ENCODE measurements at regions of chr10 and their contacts with region 1.

Region 1: DNA sequence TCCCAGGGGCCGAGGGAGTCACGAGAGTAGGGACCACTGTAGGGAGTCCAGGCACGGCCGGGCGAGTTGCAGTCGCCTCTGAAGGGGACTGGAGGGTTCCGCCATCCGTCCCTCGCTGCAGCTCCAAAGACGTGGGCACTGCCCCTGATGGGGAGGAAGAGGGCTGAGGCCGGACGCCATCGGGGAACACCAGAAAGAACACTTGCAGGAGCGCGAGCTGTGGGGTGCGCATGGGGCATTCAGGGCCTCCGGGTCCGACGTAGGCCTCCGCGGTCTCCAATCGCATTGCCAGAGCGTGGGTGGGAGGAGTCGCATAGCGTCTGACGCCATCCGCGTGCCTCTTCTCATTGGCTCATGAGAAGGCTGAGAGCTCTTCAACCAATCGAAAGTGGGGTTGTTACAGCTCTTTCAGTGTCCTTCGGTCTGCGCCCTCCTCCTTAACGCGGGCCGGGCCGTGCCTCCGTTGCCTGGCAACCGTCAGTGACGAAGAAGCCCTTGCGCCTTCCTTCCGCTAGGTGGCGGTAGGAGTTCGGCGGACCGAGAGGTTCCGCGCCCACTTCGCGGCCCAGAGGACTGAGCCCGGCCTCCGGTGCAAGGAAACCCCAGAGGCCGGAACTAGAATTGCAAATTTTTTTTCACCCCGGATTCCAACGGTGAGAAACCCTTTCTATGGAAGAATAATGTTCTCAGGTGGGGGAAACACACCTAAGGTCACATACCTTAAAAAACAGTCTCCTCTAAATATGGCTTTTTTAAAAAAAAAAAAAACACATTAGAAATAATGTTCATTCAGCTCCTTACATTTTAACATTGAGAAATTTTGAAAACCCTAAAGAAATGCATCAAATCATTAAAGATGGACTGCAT is at the start of gene TCTN3:
- DNase-seq: peak; percentile 97
- ATAC-seq: peak; percentile 98
- H3K4me3 Mint-ChIP-seq: peak within 1 kb of the TSS; percentile 98
- H3K27ac Mint-ChIP-seq: peak within 1 kb of the TSS; percentile 93
- H3K4me1 Mint-ChIP-seq: peaks cover 38% of the 10 kb centered on the region
- H3K27me3 Mint-ChIP-seq: peaks cover 2% of the 10 kb centered on the region
- CTCF ChIP-seq: peak; percentile 98
- total RNA-seq, gene TCTN3: 17.6 to 20.5 TPM

Region 2: GRCh38 chr10:95664543-95664942 is 29.4 kb before region 1 on chr10:
- CTCF ChIA-PET with region 1: interaction called, 11 read pairs
- POLR2A ChIA-PET with region 1: interaction called, 3 read pairs
- intact Hi-C with region 1: no loop called
- DNase-seq: no peak
- ATAC-seq: no peak
- H3K4me3 Mint-ChIP-seq: no peak overlapping the region
- H3K27ac Mint-ChIP-seq: no peak overlapping the region
- H3K4me1 Mint-ChIP-seq: no peaks in the 10 kb centered on the region
- H3K27me3 Mint-ChIP-seq: no peaks in the 10 kb centered on the region
- CTCF ChIP-seq: no peak

Region 3: GRCh38 chr10:95706986-95707385 is 13.1 kb after region 1 on chr10:
- CTCF ChIA-PET with region 1: interaction called, 16 read pairs
- POLR2A ChIA-PET with region 1: interaction called, 3 read pairs
- intact Hi-C with region 1: no loop called
- DNase-seq: no peak
- ATAC-seq: no peak
- H3K4me3 Mint-ChIP-seq: no peak overlapping the region
- H3K27ac Mint-ChIP-seq: no peak overlapping the region
- H3K4me1 Mint-ChIP-seq: no peaks in the 10 kb centered on the region
- H3K27me3 Mint-ChIP-seq: no peaks in the 10 kb centered on the region
- CTCF ChIP-seq: no peak

Region 4: GRCh38 chr10:95790982-95791381 is 97.1 kb after region 1 on chr10:
- CTCF ChIA-PET with region 1: interaction called, 11 read pairs
- POLR2A ChIA-PET with region 1: no interaction called
- intact Hi-C with region 1: no loop called
- DNase-seq: no peak
- ATAC-seq: no peak
- H3K4me3 Mint-ChIP-seq: no peak overlapping the region
- H3K27ac Mint-ChIP-seq: peak overlapping the region; percentile 43
- H3K4me1 Mint-ChIP-seq: peaks cover 23% of the 10 kb centered on the region
- H3K27me3 Mint-ChIP-seq: peaks cover 2% of the 10 kb centered on the region
- CTCF ChIP-seq: no peak

Region 5: GRCh38 chr10:95841661-95842498 is 148.0 kb after region 1 on chr10:
- CTCF ChIA-PET with region 1: interaction called, 262 read pairs
- POLR2A ChIA-PET with region 1: interaction called, 7 read pairs
- intact Hi-C with region 1: loop called (anchors 1 kb)
- DNase-seq: peak; percentile 66
- ATAC-seq: peak; percentile 69
- H3K4me3 Mint-ChIP-seq: no peak overlapping the region
- H3K27ac Mint-ChIP-seq: peak overlapping the region; percentile 17
- H3K4me1 Mint-ChIP-seq: peaks cover 15% of the 10 kb centered on the region
- H3K27me3 Mint-ChIP-seq: peaks cover 3% of the 10 kb centered on the region
- CTCF ChIP-seq: peak; percentile 77

Region 6: DNA sequence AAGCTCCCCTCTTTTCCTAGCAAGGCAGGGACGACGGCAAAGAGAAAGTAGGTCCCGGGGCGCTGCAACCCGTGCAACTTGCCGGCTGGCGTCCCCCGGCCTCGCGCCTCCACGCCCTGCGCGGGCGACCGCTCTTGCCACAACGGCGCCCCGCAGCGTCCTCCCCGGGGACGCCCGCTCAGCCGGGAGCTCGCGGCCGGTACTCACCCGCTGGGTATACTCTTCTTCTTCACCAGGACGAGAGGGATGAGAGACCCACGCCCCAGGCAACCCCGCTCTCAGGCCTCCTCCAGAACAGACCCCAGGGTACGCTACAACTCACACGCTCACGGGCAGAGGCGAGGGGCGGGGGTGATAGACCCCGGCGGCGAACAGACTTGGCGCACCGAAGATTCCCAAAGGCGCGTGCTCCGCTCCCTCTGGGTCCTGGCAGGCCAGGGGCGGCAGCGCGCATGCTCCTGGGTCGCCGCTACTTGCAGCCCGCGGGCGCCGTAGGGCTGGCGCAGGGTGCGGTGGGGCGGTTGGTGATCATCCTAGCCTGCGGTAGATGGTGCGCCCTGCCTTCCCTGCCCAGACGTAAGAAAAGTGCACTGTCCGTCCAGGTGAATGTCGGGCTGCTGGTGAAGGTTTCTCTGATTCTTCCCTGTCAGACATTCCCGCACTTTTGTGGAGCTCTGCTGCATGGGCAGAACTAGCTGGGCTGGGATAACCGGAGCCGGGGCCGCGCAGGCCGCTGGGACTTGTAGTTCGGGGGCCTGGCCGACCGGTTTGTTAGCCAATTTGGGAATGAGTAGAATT is 213.8 kb after region 1 on chr10 and contains the start of gene CC2D2B:
- CTCF ChIA-PET with region 1: interaction called, 16 read pairs
- POLR2A ChIA-PET with region 1: interaction called, 4 read pairs
- intact Hi-C with region 1: no loop called
- DNase-seq: peak; percentile 80
- ATAC-seq: peak; percentile 91
- H3K4me3 Mint-ChIP-seq: peak within 1 kb of the TSS; percentile 87
- H3K27ac Mint-ChIP-seq: peak within 1 kb of the TSS; percentile 90
- H3K4me1 Mint-ChIP-seq: peaks cover 14% of the 10 kb centered on the region
- H3K27me3 Mint-ChIP-seq: no peaks in the 10 kb centered on the region
- CTCF ChIP-seq: no peak
- total RNA-seq, gene CC2D2B: 0.31 TPM in 1 of 2 experiments, not detected in the other

Region 7: GRCh38 chr10:95920798-95921426 is 227.0 kb after region 1 on chr10:
- CTCF ChIA-PET with region 1: no interaction called
- POLR2A ChIA-PET with region 1: no interaction called
- intact Hi-C with region 1: no loop called
- DNase-seq: no peak
- ATAC-seq: no peak
- H3K4me3 Mint-ChIP-seq: no peak overlapping the region
- H3K27ac Mint-ChIP-seq: no peak overlapping the region
- H3K4me1 Mint-ChIP-seq: no peaks in the 10 kb centered on the region
- H3K27me3 Mint-ChIP-seq: peaks cover 3% of the 10 kb centered on the region
- CTCF ChIP-seq: no peak